Testis (tissue), 5 donors: ENCODE measurements at regions of chr10 and their contacts with region 1.

Region 1: GRCh38 chr10:58180666-58181065 is 87.0 kb downstream of the IPMK start:
- DNase-seq: no peak
- H3K4me3 ChIP-seq: no peak overlapping the region
- H3K27ac ChIP-seq: no peak overlapping the region
- H3K4me1 ChIP-seq: no peaks in the 10 kb centered on the region
- H3K27me3 ChIP-seq: no peaks in the 10 kb centered on the region
- CTCF ChIP-seq: no peak
- POLR2A ChIP-seq: no peak

Region 2: GRCh38 chr10:58291538-58292174 is 111.0 kb after region 1 on chr10:
- intact Hi-C with region 1: loop called (anchors 5 kb)
- DNase-seq: peak; percentile 21
- H3K4me3 ChIP-seq: no peak overlapping the region
- H3K27ac ChIP-seq: no peak overlapping the region
- H3K4me1 ChIP-seq: no peaks in the 10 kb centered on the region
- H3K27me3 ChIP-seq: no peaks in the 10 kb centered on the region
- CTCF ChIP-seq: peak; percentile 49 to 59 (median 57)
- POLR2A ChIP-seq: no peak